ENCODE measurements at regions of chr12 and their contacts with region 1.

Region 1: DNA sequence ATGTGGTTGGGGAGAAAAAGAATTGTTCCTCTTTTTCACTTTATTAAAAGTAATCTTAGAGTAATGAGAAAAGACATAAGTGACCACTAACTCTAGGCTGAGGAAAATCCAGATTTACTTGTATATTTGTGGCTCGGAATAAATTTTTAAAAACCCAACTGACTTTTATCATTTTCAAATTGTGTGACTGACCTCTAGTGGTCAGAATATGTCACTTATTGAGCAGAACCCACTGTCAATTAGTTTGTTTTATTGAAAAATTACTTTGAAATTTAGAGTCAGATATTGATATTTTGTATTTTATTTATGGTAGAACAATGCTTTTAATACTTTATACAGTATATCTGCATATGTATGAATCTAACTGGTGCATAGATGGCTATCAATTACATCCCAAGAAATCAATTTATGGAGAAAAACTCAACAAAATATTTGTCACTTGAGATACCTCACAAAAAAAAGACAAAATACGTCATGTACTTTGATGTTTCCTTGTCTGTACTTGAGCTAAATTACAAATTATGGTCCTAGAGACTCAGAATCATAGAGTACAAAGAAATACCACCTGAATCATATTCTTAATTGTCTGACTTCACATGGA is 229.4 kb downstream of the CNTN1 start:
- DNase-seq: no peak
- ATAC-seq: no peak

Region 2: GRCh38 chr12:40622246-40622838 is 299.3 kb before region 1 on chr12:
- intact Hi-C with region 1: loop called (anchors 5 kb)
- DNase-seq: no peak
- ATAC-seq: no peak

Region 3: GRCh38 chr12:40843495-40843894 is 78.2 kb before region 1 on chr12:
- intact Hi-C with region 1: no loop called
- DNase-seq: no peak
- ATAC-seq: no peak

Measured in Right ventricle myocardium inferior (tissue), 1 donor.